ENCODE measurements at regions of chr14 and their contacts with region 1.

Region 1: DNA sequence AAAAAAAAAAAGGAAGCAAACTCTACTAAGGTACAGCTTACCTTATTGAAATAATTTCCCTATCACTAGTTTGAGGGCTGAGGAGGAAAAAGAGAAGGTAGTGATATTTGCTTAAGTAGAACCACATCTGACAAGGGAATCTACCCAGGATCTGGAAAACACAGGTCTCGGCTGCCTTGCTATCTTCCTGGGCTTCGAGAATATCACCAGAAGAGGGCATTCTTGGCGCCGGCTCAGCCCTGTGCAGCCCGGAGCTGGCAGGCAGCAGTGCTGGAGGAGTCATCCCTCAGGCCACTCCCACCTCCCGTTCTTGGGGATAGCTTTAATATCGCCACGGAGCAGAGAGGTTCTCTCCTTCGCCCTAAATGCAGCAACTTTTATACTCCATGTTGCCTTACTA is 1181.2 kb downstream of the VRK1 start:
- DNase-seq: peak; percentile 64 to 85 (median 67)
- H3K4me3 ChIP-seq: peak overlapping the region in 1 of 2 donors; percentile 64
- H3K4me3 Mint-ChIP-seq: peak overlapping the region; percentile 86 to 95 (median 92)
- H3K27ac ChIP-seq: peak overlapping the region; percentile 73
- H3K27ac Mint-ChIP-seq: peak overlapping the region; percentile 95 to 97 (median 96)
- H3K4me1 ChIP-seq: peaks cover 47% of the 10 kb centered on the region
- H3K4me1 Mint-ChIP-seq: peaks cover 39 to 67% (median 50%) of the 10 kb centered on the region in 4 donors
- H3K27me3 ChIP-seq: no peaks in the 10 kb centered on the region
- H3K27me3 Mint-ChIP-seq: peaks cover 0 to 2% of the 10 kb centered on the region in 2 donors

Region 2: DNA sequence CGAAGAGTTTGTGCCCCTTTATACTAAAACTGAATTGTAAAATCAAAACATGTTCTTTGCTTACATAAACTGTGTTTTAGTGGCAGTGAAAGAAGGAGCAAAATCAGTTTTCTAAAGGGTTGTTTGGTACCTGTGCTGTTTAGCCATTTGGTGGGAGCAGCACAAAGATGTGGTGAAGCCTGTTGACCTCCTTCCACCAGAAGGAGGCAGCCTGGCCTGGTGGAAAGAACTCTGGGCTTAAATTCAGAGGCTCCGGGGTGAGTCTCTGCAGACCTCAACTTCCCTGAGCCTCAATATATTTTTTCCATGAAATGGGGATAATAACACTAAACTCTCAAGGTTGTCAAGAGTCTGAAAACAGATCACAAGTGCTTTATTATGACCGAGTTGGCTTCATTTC is 678.7 kb before region 1 on chr14:
- CTCF ChIA-PET with region 1: interaction called, 5 read pairs
- POLR2A ChIA-PET with region 1: no interaction called
- intact Hi-C with region 1: loop called (anchors 1 kb)
- DNase-seq: peak in 4 of 5 donors; percentile 21 to 36 (median 24)
- H3K4me3 ChIP-seq: no peak overlapping the region
- H3K4me3 Mint-ChIP-seq: no peak overlapping the region
- H3K27ac ChIP-seq: no peak overlapping the region
- H3K27ac Mint-ChIP-seq: no peak overlapping the region
- H3K4me1 ChIP-seq: no peaks in the 10 kb centered on the region
- H3K4me1 Mint-ChIP-seq: peaks cover 0 to 27% (median 9%) of the 10 kb centered on the region in 4 donors
- H3K27me3 ChIP-seq: no peaks in the 10 kb centered on the region
- H3K27me3 Mint-ChIP-seq: peaks cover 2 to 5% of the 10 kb centered on the region in 2 donors

Region 3: DNA sequence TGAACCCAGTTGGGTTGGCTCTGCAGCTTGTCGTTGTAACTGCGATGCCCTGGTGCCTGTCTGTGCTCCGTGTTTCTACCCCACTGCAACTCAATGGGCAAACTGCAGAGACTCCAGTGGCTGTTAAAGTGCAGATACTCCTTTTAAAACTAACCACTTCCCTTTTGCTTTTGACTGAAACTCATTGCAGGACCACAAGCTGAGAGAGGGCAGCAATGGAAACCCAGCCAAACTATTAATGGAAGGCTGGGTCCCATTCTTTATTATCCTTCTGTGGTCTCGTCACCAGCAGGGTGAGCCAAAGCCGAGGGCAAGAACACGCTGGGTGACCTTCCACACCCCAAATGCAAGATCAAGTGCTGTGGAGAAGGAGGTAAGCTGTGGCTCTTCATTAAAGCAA is 270.7 kb before region 1 on chr14:
- CTCF ChIA-PET with region 1: interaction called, 8 read pairs
- POLR2A ChIA-PET with region 1: interaction called, 13 read pairs
- intact Hi-C with region 1: loop called (anchors 5 kb)
- DNase-seq: peak; percentile 24 to 36 (median 28)
- H3K4me3 ChIP-seq: no peak overlapping the region
- H3K4me3 Mint-ChIP-seq: peak overlapping the region in 7 of 8 donors; percentile 25 to 88 (median 68)
- H3K27ac ChIP-seq: no peak overlapping the region
- H3K27ac Mint-ChIP-seq: peak overlapping the region; percentile 5 to 85 (median 74)
- H3K4me1 ChIP-seq: peaks cover 84% of the 10 kb centered on the region
- H3K4me1 Mint-ChIP-seq: peaks cover 79 to 100% (median 90%) of the 10 kb centered on the region in 4 donors
- H3K27me3 ChIP-seq: no peaks in the 10 kb centered on the region
- H3K27me3 Mint-ChIP-seq: no peaks in the 10 kb centered on the region

Region 4: GRCh38 chr14:97900196-97900854 is 78.0 kb before region 1 on chr14:
- CTCF ChIA-PET with region 1: no interaction called
- POLR2A ChIA-PET with region 1: no interaction called
- intact Hi-C with region 1: no loop called
- DNase-seq: no peak
- H3K4me3 ChIP-seq: no peak overlapping the region
- H3K4me3 Mint-ChIP-seq: no peak overlapping the region
- H3K27ac ChIP-seq: no peak overlapping the region
- H3K27ac Mint-ChIP-seq: no peak overlapping the region
- H3K4me1 ChIP-seq: no peaks in the 10 kb centered on the region
- H3K4me1 Mint-ChIP-seq: no peaks in the 10 kb centered on the region
- H3K27me3 ChIP-seq: no peaks in the 10 kb centered on the region
- H3K27me3 Mint-ChIP-seq: no peaks in the 10 kb centered on the region

Region 5: GRCh38 chr14:98059106-98059505 is 80.8 kb after region 1 on chr14:
- CTCF ChIA-PET with region 1: no interaction called
- POLR2A ChIA-PET with region 1: no interaction called
- intact Hi-C with region 1: no loop called
- DNase-seq: no peak
- H3K4me3 ChIP-seq: no peak overlapping the region
- H3K4me3 Mint-ChIP-seq: no peak overlapping the region
- H3K27ac ChIP-seq: no peak overlapping the region
- H3K27ac Mint-ChIP-seq: peak overlapping the region in 1 of 7 donors; percentile 12
- H3K4me1 ChIP-seq: no peaks in the 10 kb centered on the region
- H3K4me1 Mint-ChIP-seq: peaks cover 0 to 2% (median 0%) of the 10 kb centered on the region in 4 donors
- H3K27me3 ChIP-seq: no peaks in the 10 kb centered on the region
- H3K27me3 Mint-ChIP-seq: no peaks in the 10 kb centered on the region

Region 6: DNA sequence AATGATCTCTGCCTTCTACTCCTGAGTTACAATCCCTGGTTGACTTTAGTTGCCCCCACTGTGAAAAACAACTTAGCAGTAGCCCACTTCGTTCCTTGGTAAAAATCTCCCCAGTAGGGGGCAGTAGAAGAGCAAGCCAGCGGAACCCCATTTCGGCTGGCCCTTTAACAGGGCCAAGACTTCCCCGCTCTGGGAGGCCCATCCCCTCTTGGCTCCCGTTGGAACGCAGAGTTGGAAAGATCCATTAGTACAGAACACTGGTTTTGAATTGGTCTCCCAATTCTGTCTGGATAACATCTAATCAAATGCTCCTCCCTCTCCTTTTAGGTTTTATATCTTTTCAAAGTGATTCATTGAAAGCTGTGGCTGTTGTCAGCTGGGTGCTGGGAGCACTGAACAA is 160.3 kb after region 1 on chr14:
- CTCF ChIA-PET with region 1: interaction called, 64 read pairs
- POLR2A ChIA-PET with region 1: interaction called, 90 read pairs
- intact Hi-C with region 1: loop called (anchors 1 kb)
- DNase-seq: peak; percentile 69 to 81 (median 76)
- H3K4me3 ChIP-seq: peak overlapping the region in 1 of 2 donors; percentile 1
- H3K4me3 Mint-ChIP-seq: peak overlapping the region; percentile 52 to 88 (median 74)
- H3K27ac ChIP-seq: peak overlapping the region; percentile 59
- H3K27ac Mint-ChIP-seq: peak overlapping the region; percentile 84 to 96 (median 92)
- H3K4me1 ChIP-seq: peaks cover 88% of the 10 kb centered on the region
- H3K4me1 Mint-ChIP-seq: peaks cover 59 to 90% (median 77%) of the 10 kb centered on the region in 4 donors
- H3K27me3 ChIP-seq: no peaks in the 10 kb centered on the region
- H3K27me3 Mint-ChIP-seq: no peaks in the 10 kb centered on the region

Region 7: DNA sequence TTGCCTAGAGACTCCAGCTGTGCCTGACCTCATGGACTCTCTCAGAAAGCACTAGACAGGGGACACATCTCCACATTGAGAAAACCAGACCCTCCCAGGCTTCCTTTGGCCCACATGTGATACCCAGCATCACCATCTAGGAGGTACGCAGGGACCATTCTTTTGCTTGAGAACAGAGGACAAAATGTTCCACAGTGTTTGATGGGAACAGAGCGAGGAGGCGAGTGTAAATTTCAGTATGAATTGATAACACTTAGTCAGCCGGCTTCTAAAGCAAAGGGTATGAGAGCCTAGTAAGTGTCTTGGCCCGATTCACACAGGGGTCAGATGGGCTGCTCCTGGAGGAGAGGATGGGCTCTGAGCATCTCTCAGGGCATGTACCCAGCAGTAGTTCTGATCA is 241.3 kb after region 1 on chr14:
- CTCF ChIA-PET with region 1: no interaction called
- POLR2A ChIA-PET with region 1: no interaction called
- intact Hi-C with region 1: loop called (anchors 5 kb)
- DNase-seq: no peak
- H3K4me3 ChIP-seq: no peak overlapping the region
- H3K4me3 Mint-ChIP-seq: peak overlapping the region in 3 of 8 donors; percentile 3 to 51 (median 32)
- H3K27ac ChIP-seq: no peak overlapping the region
- H3K27ac Mint-ChIP-seq: peak overlapping the region in 2 of 7 donors; percentile 60 to 90
- H3K4me1 ChIP-seq: peaks cover 66% of the 10 kb centered on the region
- H3K4me1 Mint-ChIP-seq: peaks cover 27 to 42% (median 37%) of the 10 kb centered on the region in 4 donors
- H3K27me3 ChIP-seq: no peaks in the 10 kb centered on the region
- H3K27me3 Mint-ChIP-seq: no peaks in the 10 kb centered on the region

Region 8: DNA sequence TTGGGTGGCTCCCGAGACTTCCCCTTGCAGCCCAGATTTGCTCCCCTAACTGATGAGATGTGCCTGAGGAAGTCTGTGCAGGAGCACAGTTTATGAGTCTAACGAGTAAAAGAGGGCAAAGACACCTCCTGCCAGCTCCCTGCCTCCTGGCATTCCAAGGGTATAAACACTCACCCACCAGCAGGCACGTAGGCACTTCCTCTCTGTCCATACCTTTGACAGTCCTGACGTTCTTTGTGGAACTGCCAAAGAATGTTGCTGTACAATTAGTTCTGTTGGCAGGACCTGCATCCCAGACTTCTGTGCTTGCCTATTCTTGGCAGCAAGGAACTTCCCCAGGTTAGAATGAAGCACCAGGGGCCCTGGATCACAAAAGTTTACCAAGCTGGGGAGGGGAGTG is 404.3 kb after region 1 on chr14:
- CTCF ChIA-PET with region 1: no interaction called
- POLR2A ChIA-PET with region 1: no interaction called
- intact Hi-C with region 1: no loop called
- DNase-seq: no peak
- H3K4me3 ChIP-seq: no peak overlapping the region
- H3K4me3 Mint-ChIP-seq: no peak overlapping the region
- H3K27ac ChIP-seq: no peak overlapping the region
- H3K27ac Mint-ChIP-seq: peak overlapping the region in 1 of 7 donors; percentile 42
- H3K4me1 ChIP-seq: no peaks in the 10 kb centered on the region
- H3K4me1 Mint-ChIP-seq: peaks cover 0 to 5% (median 1%) of the 10 kb centered on the region in 4 donors
- H3K27me3 ChIP-seq: no peaks in the 10 kb centered on the region
- H3K27me3 Mint-ChIP-seq: peaks cover 0 to 1% of the 10 kb centered on the region in 2 donors

Region 9: DNA sequence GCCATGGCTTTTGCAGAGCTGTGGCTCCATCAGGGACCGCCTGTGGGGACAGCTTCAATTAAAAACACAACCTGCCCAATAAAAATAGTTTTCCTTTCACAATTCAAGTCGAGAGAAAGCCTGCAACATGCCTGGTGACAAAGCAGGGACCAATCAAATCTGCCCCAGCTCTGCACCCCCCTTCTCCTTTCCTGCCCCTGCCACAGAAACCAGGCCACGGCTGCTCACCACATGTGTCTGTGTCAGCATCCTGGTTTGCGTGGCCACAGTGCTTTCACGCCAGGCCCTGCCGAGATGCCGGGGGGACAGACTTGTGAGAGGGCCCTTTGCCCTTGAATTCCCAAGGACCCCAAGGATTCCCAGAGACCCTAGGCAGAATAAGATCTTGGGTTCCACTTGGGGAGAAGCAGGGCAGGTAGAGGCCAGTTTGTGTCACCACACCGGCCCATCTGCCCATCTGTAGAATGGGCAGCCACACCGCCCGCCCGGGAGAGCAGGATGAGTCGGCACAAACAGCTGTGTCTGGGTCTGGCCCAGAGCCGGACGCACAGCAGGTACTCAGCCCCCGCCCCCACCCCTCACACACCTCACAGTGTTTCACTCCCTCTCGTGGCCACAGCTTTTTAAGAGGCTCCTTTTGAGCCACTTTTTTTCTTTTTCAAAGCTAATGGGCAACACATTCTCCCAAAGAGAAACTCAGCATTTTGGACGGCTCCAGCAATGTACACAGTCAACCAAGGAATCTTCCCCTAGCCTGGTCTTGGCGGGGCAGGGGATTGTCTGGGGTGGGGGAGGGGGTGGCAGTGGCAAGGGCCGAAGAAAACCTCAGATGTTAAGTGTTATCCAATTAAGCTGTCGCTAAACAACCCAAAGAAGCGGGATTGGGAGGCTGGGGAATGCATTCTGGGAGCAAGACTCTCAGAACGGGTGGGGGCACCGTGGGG is 1252.1 kb after region 1 on chr14:
- CTCF ChIA-PET with region 1: interaction called, 4 read pairs
- POLR2A ChIA-PET with region 1: interaction called, 9 read pairs
- intact Hi-C with region 1: loop called (anchors 2 kb)
- DNase-seq: peak; percentile 88 to 95 (median 90)
- H3K4me3 ChIP-seq: peak overlapping the region in 1 of 2 donors; percentile 13
- H3K4me3 Mint-ChIP-seq: peak overlapping the region; percentile 56 to 94 (median 80)
- H3K27ac ChIP-seq: peak overlapping the region; percentile 98
- H3K27ac Mint-ChIP-seq: peak overlapping the region; percentile 98 to 99 (median 99)
- H3K4me1 ChIP-seq: peaks cover 100% of the 10 kb centered on the region
- H3K4me1 Mint-ChIP-seq: peaks cover 78 to 98% (median 89%) of the 10 kb centered on the region in 4 donors
- H3K27me3 ChIP-seq: no peaks in the 10 kb centered on the region
- H3K27me3 Mint-ChIP-seq: no peaks in the 10 kb centered on the region